Activated CD8-positive, alpha-beta T cell treated with anti-CD3 and anti-CD28 coated beads for 36 hours (primary cell): ENCODE measurements at regions of chr16 and their contacts with region 1.

Region 1: DNA sequence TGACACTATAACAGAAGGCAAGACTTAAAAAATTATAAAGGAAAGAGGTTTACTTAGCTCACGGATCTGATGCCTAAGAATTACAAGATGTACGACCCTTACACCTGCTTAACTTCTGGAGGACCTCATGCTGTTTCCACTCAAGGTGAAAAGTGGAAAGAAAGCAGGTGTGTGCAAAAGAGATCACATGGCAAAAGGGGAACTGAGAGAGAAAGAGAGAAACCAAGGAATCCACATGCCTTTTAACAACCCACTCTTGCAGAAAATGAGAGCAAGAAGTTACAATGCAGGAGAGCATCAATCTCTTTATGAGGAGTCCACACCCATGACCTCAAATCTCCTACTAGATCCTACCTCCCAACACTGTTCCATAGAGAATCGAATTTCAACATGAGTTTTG is 2382.2 kb downstream of the TP53TG3F start:
- DNase-seq: no peak
- ATAC-seq: no peak
- H3K4me3 Mint-ChIP-seq: no peak overlapping the region
- H3K27ac Mint-ChIP-seq: no peak overlapping the region
- H3K4me1 Mint-ChIP-seq: no peaks in the 10 kb centered on the region
- H3K27me3 Mint-ChIP-seq: no peaks in the 10 kb centered on the region
- CTCF ChIP-seq: no peak

Region 2: GRCh38 chr16:35751191-35751941 is 90.3 kb before region 1 on chr16:
- CTCF ChIA-PET with region 1: no interaction called
- POLR2A ChIA-PET with region 1: no interaction called
- intact Hi-C with region 1: no loop called
- DNase-seq: no peak
- ATAC-seq: no peak
- H3K4me3 Mint-ChIP-seq: no peak overlapping the region
- H3K27ac Mint-ChIP-seq: no peak overlapping the region
- H3K4me1 Mint-ChIP-seq: no peaks in the 10 kb centered on the region
- H3K27me3 Mint-ChIP-seq: no peaks in the 10 kb centered on the region
- CTCF ChIP-seq: no peak

Region 3: DNA sequence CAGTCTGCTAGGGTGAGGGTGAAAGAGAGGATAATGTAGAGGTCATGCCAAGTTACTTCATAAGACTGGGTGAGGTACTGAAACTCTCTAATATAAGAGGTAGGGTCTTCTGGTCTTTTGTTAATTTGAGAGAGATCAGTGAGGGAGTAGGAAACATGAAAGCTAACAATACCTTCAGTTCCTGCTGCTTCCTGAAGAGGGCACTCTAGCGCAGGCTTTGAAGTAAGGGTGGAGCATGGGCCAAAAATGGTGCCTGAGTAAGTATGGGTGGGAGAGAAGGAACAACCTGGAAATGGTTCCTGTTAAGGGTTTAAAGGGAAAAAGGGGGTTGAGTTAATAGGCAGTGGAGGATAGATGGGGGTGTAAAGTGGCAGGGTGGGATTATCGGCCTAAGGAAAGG is 67.3 kb after region 1 on chr16:
- CTCF ChIA-PET with region 1: no interaction called
- POLR2A ChIA-PET with region 1: no interaction called
- intact Hi-C with region 1: loop called (anchors 10 kb)
- DNase-seq: peak; percentile 4
- ATAC-seq: no peak
- H3K4me3 Mint-ChIP-seq: no peak overlapping the region
- H3K27ac Mint-ChIP-seq: no peak overlapping the region
- H3K4me1 Mint-ChIP-seq: no peaks in the 10 kb centered on the region
- H3K27me3 Mint-ChIP-seq: no peaks in the 10 kb centered on the region
- CTCF ChIP-seq: peak; percentile 21